ENCODE measurements at regions of chr3 and their contacts with region 1.

Region 1: DNA sequence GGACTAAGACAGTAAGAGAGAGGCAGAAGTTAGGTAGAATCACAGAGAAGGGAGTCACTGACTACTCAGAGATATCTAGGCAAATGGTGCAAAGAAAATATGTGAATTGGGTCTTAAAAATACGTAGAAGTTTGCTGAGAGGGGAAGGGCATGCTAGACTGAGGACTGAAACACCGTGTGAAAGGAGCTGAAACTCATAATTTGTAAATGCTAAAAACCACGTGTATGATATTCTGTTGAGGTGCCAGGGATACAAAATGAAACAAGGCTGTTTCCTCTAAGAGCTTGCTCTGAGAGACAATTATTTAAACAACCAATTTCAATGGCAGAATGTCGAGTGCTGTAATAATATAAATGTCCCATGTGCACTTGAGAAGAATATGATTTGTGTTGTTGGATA is 47.2 kb downstream of the NCK1 start:
- DNase-seq: no peak
- ATAC-seq: no peak
- H3K4me3 ChIP-seq: no peak overlapping the region
- H3K27ac ChIP-seq: no peak overlapping the region
- H3K4me1 ChIP-seq: peaks cover 32% of the 10 kb centered on the region
- H3K27me3 ChIP-seq: no peaks in the 10 kb centered on the region
- CTCF ChIP-seq: no peak

Region 2: DNA sequence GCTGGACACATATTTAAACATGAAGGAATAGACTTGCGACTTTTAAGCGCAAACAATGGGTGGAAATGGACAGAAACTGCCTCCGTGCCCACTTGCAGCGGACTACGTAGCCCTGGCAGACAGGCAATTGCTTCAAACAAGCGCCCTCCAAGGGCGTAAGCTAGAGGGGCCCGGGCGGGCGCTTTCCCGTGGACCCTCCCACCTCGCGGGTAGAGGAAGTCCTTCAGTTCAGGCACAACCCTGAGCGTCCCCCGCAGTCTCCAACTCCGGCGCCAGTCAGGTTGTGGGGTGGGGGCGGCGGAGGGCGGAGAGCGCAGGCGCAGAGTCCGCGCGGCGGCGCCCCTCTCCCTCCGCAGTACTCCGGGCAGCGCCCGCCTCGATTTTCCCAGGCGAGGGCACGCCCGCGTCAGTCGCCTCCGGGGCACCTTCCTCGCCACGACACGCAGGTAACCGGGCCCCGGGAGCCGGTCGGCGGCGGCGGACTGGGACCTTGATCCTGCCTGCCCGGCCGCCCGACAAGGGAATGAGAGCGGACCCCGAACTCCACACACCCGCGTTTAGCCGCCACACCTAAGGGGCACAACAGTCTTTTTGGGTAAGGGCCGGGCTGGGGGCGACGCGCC is 90.3 kb before region 1 on chr3 and contains the start of gene SLC35G2:
- intact Hi-C with region 1: no loop called
- DNase-seq: peak; percentile 54 to 64
- ATAC-seq: peak; percentile 61 to 77 (median 72)
- H3K4me3 ChIP-seq: peak within 1 kb of the TSS; percentile 86
- H3K27ac ChIP-seq: peak within 1 kb of the TSS; percentile 64
- H3K4me1 ChIP-seq: peaks cover 6% of the 10 kb centered on the region
- H3K27me3 ChIP-seq: peaks cover 0 to 29% (median 2%) of the 10 kb centered on the region in 3 donors
- CTCF ChIP-seq: no peak
- total RNA-seq, gene SLC35G2: 0.69 to 2.5 (median 1.8) TPM

Region 3: DNA sequence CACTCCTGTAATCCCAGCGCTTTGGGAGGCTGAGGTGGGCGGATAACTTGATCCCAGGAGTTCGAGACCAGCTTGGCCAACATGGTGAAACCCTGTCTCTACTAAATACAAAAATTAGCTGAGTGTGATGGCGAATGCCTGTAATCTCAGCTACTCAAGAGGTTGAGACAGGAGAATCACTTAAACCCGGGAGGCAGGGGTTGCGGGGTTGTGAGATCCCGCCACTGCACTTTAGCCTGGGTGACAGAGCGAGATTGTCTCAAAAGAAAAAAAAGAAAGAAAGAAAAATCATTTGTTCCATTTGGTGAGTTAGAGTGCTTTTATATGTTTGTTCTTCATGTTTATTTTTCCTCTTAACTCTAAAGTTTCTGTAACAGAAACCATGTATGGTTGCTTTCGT is 39.9 kb before region 1 on chr3:
- intact Hi-C with region 1: loop called in 1 of 2 experiments (anchors 5 kb)
- DNase-seq: no peak
- ATAC-seq: no peak
- H3K4me3 ChIP-seq: no peak overlapping the region
- H3K27ac ChIP-seq: no peak overlapping the region
- H3K4me1 ChIP-seq: peaks cover 18% of the 10 kb centered on the region
- H3K27me3 ChIP-seq: no peaks in the 10 kb centered on the region
- CTCF ChIP-seq: no peak

Region 4: DNA sequence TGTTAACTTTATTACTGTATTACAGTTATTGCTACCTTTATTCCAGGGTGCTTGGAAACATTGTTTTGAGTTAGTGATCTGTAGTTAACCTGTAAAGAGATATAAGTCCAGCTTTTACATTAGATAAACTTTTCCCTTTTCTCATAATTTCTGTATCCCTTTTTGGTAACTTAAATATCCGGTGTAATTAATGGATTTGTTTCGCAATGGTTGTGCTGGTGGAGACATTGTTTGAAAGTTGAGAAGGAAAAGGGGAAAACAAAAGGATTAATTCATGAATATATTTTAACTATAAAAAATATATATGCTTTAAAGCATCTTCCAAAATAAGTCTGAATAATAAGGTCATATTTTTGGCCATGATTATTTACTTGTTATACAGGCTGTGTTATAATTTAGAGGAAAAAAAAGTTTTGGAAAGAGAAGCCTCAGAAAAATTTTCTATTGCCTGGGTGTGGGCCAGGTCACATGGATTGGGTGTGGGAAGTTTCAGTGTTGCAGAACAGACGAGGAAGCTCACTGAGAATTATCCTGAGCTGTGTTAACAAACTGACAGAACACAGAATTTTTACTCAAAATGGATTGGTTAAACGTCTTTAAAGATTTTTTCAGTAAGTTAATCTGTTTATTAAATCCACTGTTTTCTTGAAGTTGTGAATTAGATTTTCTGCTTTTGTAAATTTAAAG is 20.9 kb after region 1 on chr3:
- intact Hi-C with region 1: no loop called
- DNase-seq: peak; percentile 44 to 63
- ATAC-seq: peak in 2 of 4 donors; percentile 59 to 76
- H3K4me3 ChIP-seq: peak overlapping the region; percentile 47
- H3K27ac ChIP-seq: no peak overlapping the region
- H3K4me1 ChIP-seq: peaks cover 21% of the 10 kb centered on the region
- H3K27me3 ChIP-seq: no peaks in the 10 kb centered on the region
- CTCF ChIP-seq: no peak

Measured in psoas muscle (tissue), 8 donors.